ENCODE measurements at regions of chr7 and their contacts with region 1.

Region 1: GRCh38 chr7:115840702-115841101 is 189.9 kb downstream of the TFEC start:
- DNase-seq: peak; percentile 60 to 62
- H3K4me3 ChIP-seq: no peak overlapping the region
- H3K4me3 Mint-ChIP-seq: no peak overlapping the region
- H3K27ac Mint-ChIP-seq: no peak overlapping the region
- H3K4me1 ChIP-seq: peaks cover 9% of the 10 kb centered on the region; the same call in 1 of the 2 replicates
- H3K4me1 Mint-ChIP-seq: peaks cover 14% of the 10 kb centered on the region
- H3K27me3 ChIP-seq: no peaks in the 10 kb centered on the region
- H3K27me3 Mint-ChIP-seq: no peaks in the 10 kb centered on the region
- CTCF ChIP-seq: no peak

Region 2: DNA sequence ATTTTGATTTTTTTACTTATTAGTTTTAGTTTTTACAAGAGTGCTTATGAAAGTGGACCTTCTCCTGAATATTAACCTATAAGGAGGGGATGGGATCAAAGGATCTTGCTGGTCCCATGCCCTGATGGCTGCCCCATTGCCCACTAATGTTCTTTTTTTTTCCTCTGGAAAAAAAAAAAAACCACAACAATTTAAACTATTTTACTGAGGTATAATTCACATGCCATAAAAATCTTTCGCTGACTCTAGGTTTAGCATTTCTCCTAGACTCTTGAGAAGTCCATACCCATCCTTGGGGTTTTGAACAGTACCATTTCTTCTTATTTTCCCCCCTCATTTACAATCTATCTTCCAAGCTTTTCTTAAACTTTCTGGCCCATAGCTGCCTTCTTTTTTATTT is 291.9 kb before region 1 on chr7:
- CTCF ChIA-PET with region 1: no interaction called
- POLR2A ChIA-PET with region 1: no interaction called
- intact Hi-C with region 1: no loop called
- DNase-seq: no peak
- H3K4me3 ChIP-seq: no peak overlapping the region
- H3K4me3 Mint-ChIP-seq: no peak overlapping the region
- H3K27ac Mint-ChIP-seq: no peak overlapping the region
- H3K4me1 ChIP-seq: no peaks in the 10 kb centered on the region
- H3K4me1 Mint-ChIP-seq: no peaks in the 10 kb centered on the region
- H3K27me3 ChIP-seq: no peaks in the 10 kb centered on the region
- H3K27me3 Mint-ChIP-seq: no peaks in the 10 kb centered on the region
- CTCF ChIP-seq: no peak

Region 3: DNA sequence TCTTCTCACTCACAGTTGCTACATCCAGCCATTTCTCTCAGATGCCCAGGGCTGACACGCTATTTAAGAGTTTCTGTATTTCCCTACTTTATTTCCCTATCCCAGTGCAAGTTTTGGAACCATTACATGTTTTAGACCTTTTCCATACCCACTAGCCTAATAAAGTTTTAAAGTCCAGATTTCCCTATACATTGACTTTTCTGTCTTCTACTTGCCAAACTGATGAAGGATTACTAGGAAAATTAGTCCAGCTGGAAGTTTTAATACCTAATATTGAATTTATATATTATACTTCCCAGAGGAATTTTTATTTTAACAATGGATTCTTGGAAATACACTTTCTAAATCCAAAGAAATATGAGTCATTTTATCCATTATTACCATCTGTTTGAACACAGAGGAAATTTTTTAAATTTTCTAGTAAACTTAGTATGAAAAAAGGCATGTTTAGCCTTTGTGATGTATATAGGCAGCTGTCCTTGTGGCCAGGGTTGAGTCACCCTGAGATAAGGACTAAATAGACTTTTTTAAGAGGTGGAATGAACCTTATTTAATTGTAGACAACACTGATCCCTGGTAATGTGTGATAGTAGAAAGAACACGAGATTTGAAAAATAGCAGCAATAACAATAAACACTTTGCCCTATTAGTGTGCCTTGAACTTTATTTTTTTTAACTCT is 15.1 kb before region 1 on chr7:
- CTCF ChIA-PET with region 1: no interaction called
- POLR2A ChIA-PET with region 1: no interaction called
- intact Hi-C with region 1: loop called (anchors 1 kb)
- DNase-seq: no peak
- H3K4me3 ChIP-seq: no peak overlapping the region
- H3K4me3 Mint-ChIP-seq: no peak overlapping the region
- H3K27ac Mint-ChIP-seq: no peak overlapping the region
- H3K4me1 ChIP-seq: peaks cover 21% of the 10 kb centered on the region
- H3K4me1 Mint-ChIP-seq: peaks cover 22% of the 10 kb centered on the region
- H3K27me3 ChIP-seq: no peaks in the 10 kb centered on the region
- H3K27me3 Mint-ChIP-seq: no peaks in the 10 kb centered on the region
- CTCF ChIP-seq: no peak

Region 4: DNA sequence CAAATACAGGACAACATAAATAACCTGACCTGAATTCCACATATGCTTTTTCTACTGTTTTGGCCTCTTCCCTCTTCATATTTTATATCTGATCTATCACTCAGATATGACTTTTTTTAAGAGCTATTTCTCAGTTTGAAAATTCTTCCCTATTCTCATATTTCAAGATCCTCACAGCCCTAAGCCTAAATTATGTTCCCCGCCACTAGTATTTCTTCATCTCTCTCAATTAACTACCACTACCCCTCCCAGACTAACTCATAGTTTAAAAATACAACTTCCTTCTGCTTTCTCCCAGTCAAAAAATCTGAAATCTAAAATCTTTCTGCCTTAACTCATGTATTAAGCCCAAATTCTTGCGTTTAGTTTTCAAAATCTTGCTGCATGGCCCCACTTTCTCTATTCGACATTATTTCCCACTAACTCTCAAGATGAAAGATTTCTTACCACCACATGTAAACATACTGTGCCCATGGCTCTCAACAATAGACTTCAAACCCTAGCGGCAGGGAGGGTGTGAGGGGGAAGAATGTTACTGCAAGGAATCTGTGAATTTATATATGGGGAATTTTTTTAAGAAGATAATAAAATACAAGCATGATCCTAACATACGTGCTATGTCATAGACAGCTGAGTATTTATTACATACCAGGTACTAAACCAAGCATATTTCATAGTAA is 125.2 kb after region 1 on chr7:
- CTCF ChIA-PET with region 1: no interaction called
- POLR2A ChIA-PET with region 1: no interaction called
- intact Hi-C with region 1: loop called (anchors 2 kb)
- DNase-seq: peak in 1 of 2 experiments; percentile 16
- H3K4me3 ChIP-seq: peak overlapping the region; percentile 21
- H3K4me3 Mint-ChIP-seq: peak overlapping the region; percentile 66
- H3K27ac Mint-ChIP-seq: peak overlapping the region; percentile 68
- H3K4me1 ChIP-seq: peaks cover 66% of the 10 kb centered on the region
- H3K4me1 Mint-ChIP-seq: peaks cover 37% of the 10 kb centered on the region
- H3K27me3 ChIP-seq: no peaks in the 10 kb centered on the region
- H3K27me3 Mint-ChIP-seq: no peaks in the 10 kb centered on the region
- CTCF ChIP-seq: no peak

Region 5: DNA sequence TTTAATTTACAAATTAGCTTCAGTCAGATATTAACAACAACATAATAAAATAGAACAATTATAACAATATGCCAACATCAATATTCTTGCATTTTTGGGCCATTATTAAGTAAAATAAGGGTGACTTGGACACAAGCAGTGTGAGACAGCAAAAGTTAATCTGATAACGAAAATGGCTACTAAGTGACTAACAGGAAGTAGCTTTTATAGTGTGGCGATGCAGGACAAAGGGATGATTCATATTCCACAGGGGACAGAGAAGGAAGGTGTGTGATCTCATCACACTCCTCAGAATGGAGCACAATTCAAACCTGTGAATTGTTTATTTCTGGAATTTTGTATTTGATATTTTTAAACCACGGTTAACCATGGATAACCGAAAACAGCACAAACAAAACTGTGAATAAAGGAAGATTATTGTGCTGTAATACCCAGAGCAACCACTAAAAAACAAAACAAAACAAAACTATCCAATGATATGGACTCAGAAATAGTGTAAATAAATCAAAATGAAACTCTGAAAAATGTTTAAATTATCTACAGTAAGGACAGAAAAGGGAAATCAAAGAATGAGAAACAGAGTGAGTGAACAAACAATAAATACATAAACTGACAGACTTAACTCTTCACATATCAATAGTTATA is 256.8 kb after region 1 on chr7:
- CTCF ChIA-PET with region 1: no interaction called
- POLR2A ChIA-PET with region 1: no interaction called
- intact Hi-C with region 1: no loop called
- DNase-seq: no peak
- H3K4me3 ChIP-seq: no peak overlapping the region
- H3K4me3 Mint-ChIP-seq: no peak overlapping the region
- H3K27ac Mint-ChIP-seq: no peak overlapping the region
- H3K4me1 ChIP-seq: no peaks in the 10 kb centered on the region
- H3K4me1 Mint-ChIP-seq: no peaks in the 10 kb centered on the region
- H3K27me3 ChIP-seq: no peaks in the 10 kb centered on the region
- H3K27me3 Mint-ChIP-seq: peaks cover 6% of the 10 kb centered on the region
- CTCF ChIP-seq: no peak

Region 6: DNA sequence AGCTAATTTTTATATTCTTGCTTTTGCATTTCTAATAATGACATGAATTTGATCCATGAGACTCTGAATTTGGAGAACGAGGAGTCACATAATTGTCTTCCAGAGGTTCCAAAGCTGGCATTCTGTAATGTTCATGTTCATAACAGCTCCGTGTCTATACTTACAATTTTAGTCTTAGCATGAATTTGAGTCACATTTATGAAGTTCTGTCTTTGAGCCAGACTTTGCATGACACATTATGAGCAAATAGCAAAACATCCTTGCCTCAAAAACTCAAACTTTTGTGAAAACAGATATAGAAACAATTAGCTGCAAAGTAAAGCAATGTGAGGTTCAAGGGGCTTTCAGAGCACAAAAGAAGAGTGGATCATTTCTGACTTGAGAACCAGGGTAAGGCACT is 614.3 kb after region 1 on chr7:
- CTCF ChIA-PET with region 1: no interaction called
- POLR2A ChIA-PET with region 1: no interaction called
- intact Hi-C with region 1: no loop called
- DNase-seq: no peak
- H3K4me3 ChIP-seq: no peak overlapping the region
- H3K4me3 Mint-ChIP-seq: no peak overlapping the region
- H3K27ac Mint-ChIP-seq: no peak overlapping the region
- H3K4me1 ChIP-seq: no peaks in the 10 kb centered on the region
- H3K4me1 Mint-ChIP-seq: no peaks in the 10 kb centered on the region
- H3K27me3 ChIP-seq: no peaks in the 10 kb centered on the region
- H3K27me3 Mint-ChIP-seq: no peaks in the 10 kb centered on the region
- CTCF ChIP-seq: no peak